HCT116 (cell line): ENCODE measurements at regions of chr13 and their contacts with region 1.

Region 1: DNA sequence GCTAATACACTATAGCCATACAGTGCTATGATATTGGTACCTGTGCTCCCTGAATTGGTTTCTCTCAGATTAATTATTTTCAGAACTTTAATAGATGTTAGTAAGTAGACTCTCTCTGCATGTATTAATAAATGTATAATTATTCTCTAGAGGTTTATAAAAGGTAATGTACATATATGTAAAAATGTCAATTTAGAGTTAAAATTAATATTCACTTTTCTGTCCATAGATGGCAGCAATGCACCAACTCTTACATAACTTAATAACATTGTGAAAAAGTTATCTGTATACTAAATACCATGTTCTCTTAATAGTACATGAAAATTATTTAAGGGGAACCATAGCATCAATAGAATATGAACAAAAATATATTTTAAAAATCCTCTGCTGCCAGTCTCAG is 515.0 kb upstream of the KLHL1 start:
- DNase-seq: no peak
- ATAC-seq: no peak
- H3K4me3 ChIP-seq: no peak overlapping the region
- H3K27ac ChIP-seq: no peak overlapping the region
- H3K4me1 ChIP-seq: no peaks in the 10 kb centered on the region
- H3K27me3 ChIP-seq: no peaks in the 10 kb centered on the region
- CTCF ChIP-seq: peak in 2 of 3 experiments; percentile 6 to 47; a peak in 2 of 6 replicates
- POLR2A ChIP-seq: no peak
- RAD21 ChIP-seq: peak; percentile 36; the same call in 1 of the 2 replicates

Region 2: DNA sequence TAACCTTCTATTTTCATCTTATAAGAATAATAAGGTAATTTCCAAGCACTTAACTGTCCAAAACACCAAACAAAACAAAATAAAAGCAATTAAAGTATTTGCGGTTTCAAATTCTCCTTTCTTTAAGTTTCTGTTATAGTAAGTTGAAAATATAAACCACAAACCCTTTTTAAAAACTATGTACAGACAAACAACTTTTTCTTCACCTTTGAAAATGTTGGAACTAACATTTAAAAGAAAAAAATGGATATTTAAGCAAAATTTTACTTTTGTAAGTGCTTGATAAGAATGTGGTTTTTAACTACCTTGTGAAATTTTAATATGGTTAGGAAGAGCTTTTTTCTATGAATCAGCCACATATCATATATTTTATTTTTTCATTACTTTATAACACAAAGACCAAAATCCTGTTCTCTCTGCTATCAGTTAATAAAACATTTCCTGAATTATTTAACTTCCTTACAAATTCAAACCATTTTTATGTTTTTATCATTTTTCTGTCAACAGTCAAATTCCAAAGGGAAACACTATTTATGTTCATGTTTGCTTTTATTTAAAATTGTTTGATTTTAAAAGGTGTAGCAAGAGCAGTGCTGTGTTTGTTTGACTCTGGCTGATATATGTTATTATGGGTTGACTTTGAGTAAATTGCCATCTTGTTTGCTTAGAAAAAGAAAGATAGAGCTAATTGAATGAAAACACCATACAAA is 39.1 kb after region 1 on chr13:
- CTCF ChIA-PET with region 1: no interaction called
- POLR2A ChIA-PET with region 1: no interaction called
- RAD21 ChIA-PET with region 1: no interaction called
- intact Hi-C with region 1: no loop called
- DNase-seq: no peak
- ATAC-seq: no peak
- H3K4me3 ChIP-seq: no peak overlapping the region
- H3K27ac ChIP-seq: no peak overlapping the region
- H3K4me1 ChIP-seq: no peaks in the 10 kb centered on the region
- H3K27me3 ChIP-seq: no peaks in the 10 kb centered on the region
- CTCF ChIP-seq: no peak
- POLR2A ChIP-seq: no peak
- RAD21 ChIP-seq: no peak

Region 3: GRCh38 chr13:70960841-70961443 is 337.7 kb after region 1 on chr13:
- CTCF ChIA-PET with region 1: no interaction called
- POLR2A ChIA-PET with region 1: no interaction called
- RAD21 ChIA-PET with region 1: no interaction called
- intact Hi-C with region 1: loop called (anchors 10 kb)
- DNase-seq: no peak
- ATAC-seq: no peak
- H3K4me3 ChIP-seq: no peak overlapping the region
- H3K27ac ChIP-seq: no peak overlapping the region
- H3K4me1 ChIP-seq: no peaks in the 10 kb centered on the region
- H3K27me3 ChIP-seq: no peaks in the 10 kb centered on the region
- CTCF ChIP-seq: peak; percentile 19 to 65 (median 43); a peak in 5 of 6 replicates
- POLR2A ChIP-seq: no peak
- RAD21 ChIP-seq: peak; percentile 41

Region 4: DNA sequence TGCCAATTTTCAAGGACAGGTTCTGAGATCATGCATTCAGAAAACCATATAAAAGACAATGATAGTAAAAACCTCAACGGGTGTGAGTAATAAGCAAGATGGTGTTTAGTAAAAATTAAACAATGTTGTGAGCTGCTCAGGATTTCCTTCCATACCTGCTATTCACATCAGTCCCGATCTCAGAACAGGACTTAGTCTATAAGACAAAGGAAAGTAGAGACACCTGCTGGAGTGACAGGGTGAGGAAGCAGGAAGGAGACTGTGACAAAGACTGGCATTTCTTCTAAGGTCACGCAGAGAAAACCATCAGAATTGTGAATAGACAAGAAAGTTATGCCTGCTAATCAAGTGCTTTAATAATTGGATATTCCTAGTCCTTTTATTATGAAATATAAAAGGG is 595.7 kb after region 1 on chr13:
- CTCF ChIA-PET with region 1: no interaction called
- POLR2A ChIA-PET with region 1: no interaction called
- RAD21 ChIA-PET with region 1: no interaction called
- intact Hi-C with region 1: loop called (anchors 10 kb)
- DNase-seq: no peak
- ATAC-seq: no peak
- H3K4me3 ChIP-seq: no peak overlapping the region
- H3K27ac ChIP-seq: no peak overlapping the region
- H3K4me1 ChIP-seq: no peaks in the 10 kb centered on the region
- H3K27me3 ChIP-seq: no peaks in the 10 kb centered on the region
- CTCF ChIP-seq: peak; percentile 5 to 27 (median 20); a peak in 2 of 6 replicates
- POLR2A ChIP-seq: no peak
- RAD21 ChIP-seq: peak; percentile 40